ENCODE measurements at regions of chr10 and their contacts with region 1.

Region 1: GRCh38 chr10:117568334-117568733 is 25.8 kb downstream of the EMX2 start:
- DNase-seq: no peak
- ATAC-seq: no peak
- H3K4me3 ChIP-seq: no peak overlapping the region
- H3K27ac ChIP-seq: no peak overlapping the region
- H3K4me1 ChIP-seq: no peaks in the 10 kb centered on the region
- H3K27me3 ChIP-seq: peaks cover 14% of the 10 kb centered on the region; the same call in 1 of the 2 replicates
- CTCF ChIP-seq: no peak

Region 2: GRCh38 chr10:117204316-117204715 is 364.0 kb before region 1 on chr10:
- CTCF ChIA-PET with region 1: no interaction called
- POLR2A ChIA-PET with region 1: no interaction called
- in situ Hi-C with region 1: no loop called
- intact Hi-C with region 1: no loop called
- DNase-seq: no peak
- ATAC-seq: no peak
- H3K4me3 ChIP-seq: no peak overlapping the region
- H3K27ac ChIP-seq: no peak overlapping the region
- H3K4me1 ChIP-seq: no peaks in the 10 kb centered on the region
- H3K27me3 ChIP-seq: peaks cover 3% of the 10 kb centered on the region
- CTCF ChIP-seq: no peak

Region 3: GRCh38 chr10:117581961-117582360 is 13.6 kb after region 1 on chr10:
- CTCF ChIA-PET with region 1: interaction called, 10 read pairs
- POLR2A ChIA-PET with region 1: no interaction called
- in situ Hi-C with region 1: no loop called
- intact Hi-C with region 1: no loop called
- DNase-seq: no peak
- ATAC-seq: no peak
- H3K4me3 ChIP-seq: no peak overlapping the region
- H3K27ac ChIP-seq: no peak overlapping the region
- H3K4me1 ChIP-seq: no peaks in the 10 kb centered on the region
- H3K27me3 ChIP-seq: 0 out of 2 replicates have a peak, but pooled peaks cover 4% of the 10 kb centered on the region
- CTCF ChIP-seq: no peak